Activated CD4-positive, alpha-beta T cell treated with anti-CD3 and anti-CD28 coated beads, Interleukin-2, amount 10 ng/mL, durations not matched to agents 24 days and 14 days (primary cell): ENCODE measurements at regions of chr2 and their contacts with region 1.

Region 1: DNA sequence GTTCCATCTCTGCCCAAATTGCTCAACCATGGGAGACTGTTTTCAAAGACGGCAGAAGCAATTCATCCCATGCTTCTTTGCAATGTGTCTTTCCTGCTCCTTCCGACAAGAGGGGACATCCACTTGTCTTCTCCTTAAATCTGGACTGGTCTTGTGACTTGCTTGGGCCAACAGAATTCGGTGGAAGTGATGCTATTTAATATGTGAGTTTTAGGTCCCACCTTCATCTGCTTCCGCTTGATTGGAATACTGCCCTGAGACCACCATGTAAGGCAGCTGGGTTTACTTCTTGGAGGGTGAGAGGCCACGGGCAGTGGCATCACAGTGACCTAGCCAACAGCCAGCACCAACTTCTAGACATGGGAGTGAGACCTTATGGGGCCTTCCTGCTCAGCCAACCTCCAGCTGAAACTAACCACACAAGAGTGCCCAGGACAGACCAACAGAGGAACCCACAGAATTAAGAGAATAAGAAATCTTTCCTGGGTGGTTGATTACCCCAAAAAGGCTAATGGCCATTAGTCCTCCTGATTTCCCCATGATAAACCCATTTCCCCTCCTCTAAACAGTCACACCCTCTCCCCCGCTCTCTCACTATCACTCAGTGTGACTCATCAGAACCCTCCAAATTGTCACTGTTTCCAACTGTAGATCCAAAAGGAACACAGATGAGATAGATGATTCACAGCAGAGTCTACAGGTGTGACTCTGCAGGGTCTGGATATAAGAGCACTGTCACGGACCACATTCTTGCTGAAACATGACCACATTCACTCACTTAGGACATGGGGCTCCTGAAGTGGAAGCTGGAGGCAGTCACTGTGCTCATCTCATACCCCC is 16.2 kb upstream of the RHOB start:
- DNase-seq: no peak
- H3K4me3 Mint-ChIP-seq: no peak overlapping the region
- H3K27ac Mint-ChIP-seq: peak overlapping the region; percentile 17
- H3K4me1 Mint-ChIP-seq: peaks cover 22% of the 10 kb centered on the region
- H3K27me3 Mint-ChIP-seq: peaks cover 13% of the 10 kb centered on the region

Region 2: GRCh38 chr2:20365249-20365817 is 65.3 kb before region 1 on chr2:
- intact Hi-C with region 1: loop called (anchors 2 kb)
- DNase-seq: peak; percentile 88
- H3K4me3 Mint-ChIP-seq: peak overlapping the region; percentile 29
- H3K27ac Mint-ChIP-seq: peak overlapping the region; percentile 74
- H3K4me1 Mint-ChIP-seq: peaks cover 27% of the 10 kb centered on the region
- H3K27me3 Mint-ChIP-seq: no peaks in the 10 kb centered on the region

Region 3: DNA sequence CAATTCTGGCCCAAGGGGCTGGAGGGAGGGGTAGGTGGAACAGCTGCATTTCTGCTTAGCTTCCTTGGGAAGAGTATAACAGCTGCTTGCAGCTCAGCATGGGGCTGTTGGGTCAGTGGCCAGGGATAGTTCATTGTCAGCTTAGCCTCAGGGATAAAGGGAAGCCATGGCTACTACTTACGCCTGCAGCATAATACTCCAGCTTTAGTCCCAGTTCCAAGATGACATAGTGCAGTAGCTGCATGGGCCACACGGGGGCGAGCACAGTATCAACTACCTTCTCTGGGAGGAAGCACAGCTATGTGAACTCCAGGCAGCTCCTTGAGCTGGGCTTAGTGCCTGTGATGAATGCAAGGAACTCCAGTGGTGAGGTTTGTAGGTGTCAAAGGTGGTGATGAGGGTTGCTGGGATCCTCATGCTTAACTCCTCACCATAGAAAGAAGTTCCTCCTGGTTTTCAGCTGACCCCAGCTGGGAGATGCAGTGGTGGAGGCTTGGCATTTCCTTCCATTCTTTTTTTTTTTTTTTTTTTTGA is 19.3 kb before region 1 on chr2:
- intact Hi-C with region 1: loop called (anchors 1 kb)
- DNase-seq: peak; percentile 92
- H3K4me3 Mint-ChIP-seq: no peak overlapping the region
- H3K27ac Mint-ChIP-seq: no peak overlapping the region
- H3K4me1 Mint-ChIP-seq: no peaks in the 10 kb centered on the region
- H3K27me3 Mint-ChIP-seq: peaks cover 33% of the 10 kb centered on the region